Naive thymus-derived CD4-positive, alpha-beta T cell (primary cell): ENCODE measurements at regions of chr15 and their contacts with region 1.

Region 1: DNA sequence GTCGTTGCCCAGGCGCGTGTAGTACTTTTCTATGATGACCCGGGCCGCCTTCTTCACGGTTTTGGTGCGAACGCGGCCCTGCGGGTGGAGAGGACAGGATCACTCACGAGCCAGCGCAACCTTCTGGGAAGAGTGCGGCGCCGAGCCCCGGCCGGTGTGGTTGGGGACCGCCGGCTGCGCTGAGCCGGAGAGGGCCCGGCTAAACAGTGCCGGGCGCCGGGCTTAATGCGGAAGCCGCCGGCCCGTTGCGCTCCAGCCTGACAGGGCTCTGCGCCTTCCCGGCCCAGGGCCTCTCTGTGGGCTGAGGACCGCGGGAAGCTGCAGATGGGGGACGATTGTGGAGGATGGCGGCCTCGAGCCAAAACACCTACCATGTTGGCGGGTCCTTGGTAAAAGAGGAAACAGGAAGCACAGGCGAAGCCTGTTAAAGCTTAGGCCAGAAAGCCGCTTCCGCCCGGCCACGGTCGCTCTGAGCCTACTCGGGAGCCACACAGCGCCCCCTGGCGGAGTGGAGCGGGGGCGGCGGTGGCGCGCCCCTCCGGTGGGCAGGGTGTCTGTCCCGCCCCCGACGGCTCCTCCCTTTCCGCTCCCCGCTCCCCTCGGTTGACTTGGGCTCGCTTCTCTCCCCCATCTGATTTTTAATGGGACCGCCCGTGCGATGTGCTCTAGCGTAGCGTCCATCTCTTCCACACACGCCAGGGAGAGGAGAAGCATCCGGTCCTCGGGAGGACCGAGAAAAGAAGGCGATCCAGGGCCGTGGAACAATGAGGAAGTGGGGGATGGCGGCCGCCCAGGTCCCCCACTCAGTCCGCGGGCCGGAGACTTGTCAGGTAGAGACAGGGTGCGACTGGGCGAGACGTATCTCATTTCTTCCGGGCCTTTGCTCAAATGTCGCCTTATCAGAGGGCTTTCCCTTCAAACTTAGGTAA is at the start of gene RPS17:
- DNase-seq: peak; percentile 96 to 100 (median 99)
- ATAC-seq: peak; percentile 98
- H3K4me3 ChIP-seq: peak within 1 kb of the TSS; percentile 84
- H3K4me3 Mint-ChIP-seq: peak within 1 kb of the TSS; percentile 90 to 98 (median 96)
- H3K27ac ChIP-seq: peak within 1 kb of the TSS; percentile 90
- H3K27ac Mint-ChIP-seq: peak within 1 kb of the TSS; percentile 89 to 97 (median 95)
- H3K4me1 ChIP-seq: peaks cover 10 to 18% of the 10 kb centered on the region in 2 donors
- H3K4me1 Mint-ChIP-seq: peaks cover 13 to 43% (median 28%) of the 10 kb centered on the region in 7 donors
- H3K27me3 ChIP-seq: no peaks in the 10 kb centered on the region
- H3K27me3 Mint-ChIP-seq: peaks cover 0 to 4% (median 0%) of the 10 kb centered on the region in 5 donors
- total RNA-seq, gene RPS17: 1,951 to 3,227 (median 2,164) TPM

Region 2: DNA sequence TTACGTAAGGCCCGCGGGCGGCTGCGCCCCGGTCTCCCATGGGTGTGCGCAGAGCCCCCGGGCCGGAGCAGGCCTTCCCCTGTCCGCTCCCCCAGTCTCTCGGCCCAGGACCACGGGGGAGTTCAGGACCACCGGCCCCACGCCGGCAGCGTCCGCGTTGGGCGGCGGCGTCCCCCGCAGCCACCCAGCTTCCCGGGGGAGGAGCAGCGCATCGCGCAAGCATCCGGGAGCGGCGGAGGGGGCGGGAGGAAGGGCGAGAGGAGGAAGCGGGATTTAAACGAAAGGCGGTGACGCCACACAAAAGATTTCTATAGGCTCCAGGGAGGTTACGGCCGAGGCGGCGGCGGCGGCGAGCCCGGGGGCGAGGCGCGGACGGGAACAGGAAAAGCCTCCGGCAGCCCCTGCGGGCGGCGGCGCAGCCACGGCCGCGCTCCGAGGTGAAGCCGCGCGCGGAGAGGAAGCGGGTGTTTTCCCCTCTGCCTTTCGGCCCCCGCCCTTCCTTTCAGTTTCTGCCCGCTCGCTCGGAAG is 1539.6 kb before region 1 on chr15 and contains the start of gene TLNRD1:
- CTCF ChIA-PET with region 1: interaction called, 3 read pairs
- POLR2A ChIA-PET with region 1: no interaction called
- intact Hi-C with region 1: loop called in 1 of 2 experiments (anchors 10 kb)
- DNase-seq: peak; percentile 63 to 90 (median 79)
- ATAC-seq: peak; percentile 81
- H3K4me3 ChIP-seq: peak within 1 kb of the TSS; percentile 83
- H3K4me3 Mint-ChIP-seq: peak within 1 kb of the TSS; percentile 91 to 99 (median 96)
- H3K27ac ChIP-seq: peak within 1 kb of the TSS; percentile 91
- H3K27ac Mint-ChIP-seq: peak within 1 kb of the TSS; percentile 94 to 98 (median 97)
- H3K4me1 ChIP-seq: peaks cover 24 to 36% of the 10 kb centered on the region in 2 donors
- H3K4me1 Mint-ChIP-seq: peaks cover 24 to 66% (median 56%) of the 10 kb centered on the region in 7 donors
- H3K27me3 ChIP-seq: no peaks in the 10 kb centered on the region
- H3K27me3 Mint-ChIP-seq: no peaks in the 10 kb centered on the region
- total RNA-seq, gene TLNRD1: 11.5 to 33.0 (median 22.5) TPM

Region 3: DNA sequence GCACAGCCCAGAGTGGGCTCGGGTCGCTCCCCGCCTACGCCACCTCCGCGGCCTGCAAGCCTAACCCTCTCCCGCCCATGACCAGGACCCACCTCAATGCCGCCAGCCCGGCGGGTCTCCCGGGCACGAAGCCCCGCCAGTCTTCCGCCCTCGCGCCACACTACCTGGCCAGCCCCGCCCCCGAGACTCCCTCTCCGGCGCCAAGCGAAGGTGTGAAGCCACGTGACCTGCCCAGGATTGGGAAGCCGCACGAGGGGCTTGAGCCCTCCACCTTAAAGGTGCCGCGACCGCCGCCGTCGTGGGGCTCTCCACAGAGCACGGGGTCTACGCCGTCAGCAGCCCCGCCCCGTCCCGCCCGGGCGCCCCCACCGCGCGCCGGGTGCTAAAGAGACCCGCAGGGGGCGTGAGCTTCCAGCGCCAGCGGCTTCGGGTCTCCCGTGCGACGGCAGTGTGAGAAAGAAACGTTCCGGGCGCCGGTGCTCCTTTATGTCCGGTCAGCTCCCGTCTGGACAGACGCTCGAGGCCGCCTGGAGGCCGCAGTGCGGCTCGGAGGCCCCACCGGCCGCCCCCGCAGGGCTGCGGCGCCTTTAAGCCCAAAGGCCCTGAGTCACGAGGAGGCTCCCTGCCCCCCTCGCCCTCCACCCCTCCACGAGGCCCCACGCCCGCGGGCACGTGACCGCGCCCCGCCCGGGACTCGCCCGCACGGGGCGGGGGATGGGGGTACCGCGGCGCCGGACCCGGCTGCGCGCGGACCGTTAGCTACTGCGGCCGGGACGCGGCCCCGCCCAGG is 106.9 kb after region 1 on chr15 and contains the start of gene CPEB1:
- CTCF ChIA-PET with region 1: no interaction called
- POLR2A ChIA-PET with region 1: no interaction called
- intact Hi-C with region 1: loop called in 1 of 2 experiments (anchors 10 kb)
- DNase-seq: peak; percentile 4 to 33 (median 26)
- ATAC-seq: peak; percentile 68
- H3K4me3 ChIP-seq: peak within 1 kb of the TSS; percentile 47
- H3K4me3 Mint-ChIP-seq: peak within 1 kb of the TSS; percentile 62 to 85 (median 71)
- H3K27ac ChIP-seq: no peak within 1 kb of the TSS
- H3K27ac Mint-ChIP-seq: peak within 1 kb of the TSS in 2 of 9 donors; percentile 59 to 62
- H3K4me1 ChIP-seq: peaks cover 0 to 14% of the 10 kb centered on the region in 2 donors
- H3K4me1 Mint-ChIP-seq: peaks cover 0 to 9% (median 4%) of the 10 kb centered on the region in 7 donors
- H3K27me3 ChIP-seq: peaks cover 5 to 15% of the 10 kb centered on the region in 2 donors
- H3K27me3 Mint-ChIP-seq: peaks cover 21 to 69% (median 41%) of the 10 kb centered on the region in 5 donors
- total RNA-seq, gene CPEB1: 0.24 to 1.0 (median 0.51) TPM in 4 of 5 experiments, not detected in the other

Region 4: GRCh38 chr15:82709421-82710207 is 169.3 kb after region 1 on chr15 and contains the start of gene AP3B2:
- CTCF ChIA-PET with region 1: no interaction called
- POLR2A ChIA-PET with region 1: interaction called, 3 read pairs
- intact Hi-C with region 1: loop called in 1 of 2 experiments (anchors 1 kb)
- DNase-seq: peak; percentile 28 to 73 (median 56)
- ATAC-seq: peak; percentile 93
- H3K4me3 ChIP-seq: peak within 1 kb of the TSS; percentile 61
- H3K4me3 Mint-ChIP-seq: peak within 1 kb of the TSS in 9 of 10 donors; percentile 51 to 87 (median 67)
- H3K27ac ChIP-seq: peak within 1 kb of the TSS; percentile 7
- H3K27ac Mint-ChIP-seq: no peak within 1 kb of the TSS
- H3K4me1 ChIP-seq: peaks cover 0 to 4% of the 10 kb centered on the region in 2 donors
- H3K4me1 Mint-ChIP-seq: peaks cover 0 to 8% (median 0%) of the 10 kb centered on the region in 7 donors
- H3K27me3 ChIP-seq: peaks cover 0 to 2% of the 10 kb centered on the region in 2 donors
- H3K27me3 Mint-ChIP-seq: peaks cover 0 to 32% (median 18%) of the 10 kb centered on the region in 5 donors
- total RNA-seq, gene AP3B2: 0.56 to 1.2 (median 0.85) TPM in 4 of 5 experiments, not detected in the other

Region 5: DNA sequence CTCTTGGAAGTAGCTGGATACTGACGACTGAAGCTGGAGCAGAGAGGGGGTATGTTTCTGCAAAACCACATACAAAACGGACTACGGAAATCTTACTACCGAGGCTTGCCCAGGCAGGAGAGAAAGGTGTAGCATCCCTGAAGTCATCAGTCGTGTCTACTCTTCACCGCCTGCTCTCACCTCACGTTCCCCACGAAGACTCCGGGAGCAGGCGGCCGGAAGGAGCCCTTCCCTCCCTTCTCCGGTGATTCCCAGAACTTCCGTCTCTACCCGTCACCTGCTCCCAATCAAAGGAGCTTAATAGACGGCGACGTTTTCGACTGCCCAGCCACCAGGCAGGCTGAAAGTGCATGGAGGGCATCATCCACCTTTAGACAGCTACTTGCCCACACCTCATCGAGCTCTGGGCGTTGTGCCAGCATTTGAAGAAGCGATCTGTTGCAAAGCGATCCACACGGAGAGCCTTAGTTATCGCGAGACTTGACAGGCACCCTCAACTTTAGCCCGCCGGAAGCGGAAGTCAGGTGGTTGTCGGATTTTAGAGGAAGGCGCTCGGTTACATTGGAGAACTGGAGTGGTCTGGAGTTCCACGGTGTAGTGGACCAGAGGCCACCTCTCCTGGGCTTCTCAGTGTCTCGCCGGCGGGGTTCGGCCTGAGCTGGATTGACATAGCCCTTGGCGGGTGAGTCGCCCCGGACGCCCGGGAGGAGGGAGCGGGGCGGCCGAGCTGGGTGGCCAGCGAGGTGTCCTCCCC is 445.5 kb after region 1 on chr15 and contains the start of gene RAMAC:
- CTCF ChIA-PET with region 1: interaction called, 5 read pairs
- POLR2A ChIA-PET with region 1: interaction called, 30 read pairs
- intact Hi-C with region 1: loop called (anchors 1 kb)
- DNase-seq: peak; percentile 70 to 97 (median 91)
- ATAC-seq: peak; percentile 93
- H3K4me3 ChIP-seq: peak within 1 kb of the TSS; percentile 90
- H3K4me3 Mint-ChIP-seq: peak within 1 kb of the TSS; percentile 84 to 100 (median 99)
- H3K27ac ChIP-seq: peak within 1 kb of the TSS; percentile 82
- H3K27ac Mint-ChIP-seq: peak within 1 kb of the TSS; percentile 73 to 99 (median 95)
- H3K4me1 ChIP-seq: peaks cover 14 to 18% of the 10 kb centered on the region in 2 donors
- H3K4me1 Mint-ChIP-seq: peaks cover 21 to 43% (median 35%) of the 10 kb centered on the region in 7 donors
- H3K27me3 ChIP-seq: no peaks in the 10 kb centered on the region
- H3K27me3 Mint-ChIP-seq: no peaks in the 10 kb centered on the region
- total RNA-seq, gene RAMAC: 14.2 to 27.7 (median 18.7) TPM

Region 6: GRCh38 chr15:83011271-83012075 is 471.2 kb after region 1 on chr15 and contains the start of gene C15orf40:
- CTCF ChIA-PET with region 1: interaction called, 4 read pairs
- POLR2A ChIA-PET with region 1: interaction called, 18 read pairs
- intact Hi-C with region 1: loop called (anchors 1 kb)
- DNase-seq: peak; percentile 71 to 90 (median 80)
- ATAC-seq: peak; percentile 92
- H3K4me3 ChIP-seq: peak within 1 kb of the TSS; percentile 91
- H3K4me3 Mint-ChIP-seq: peak within 1 kb of the TSS; percentile 91 to 100 (median 96)
- H3K27ac ChIP-seq: peak within 1 kb of the TSS; percentile 77
- H3K27ac Mint-ChIP-seq: peak within 1 kb of the TSS; percentile 88 to 98 (median 92)
- H3K4me1 ChIP-seq: peaks cover 14 to 24% of the 10 kb centered on the region in 2 donors
- H3K4me1 Mint-ChIP-seq: peaks cover 43 to 70% (median 55%) of the 10 kb centered on the region in 7 donors
- H3K27me3 ChIP-seq: no peaks in the 10 kb centered on the region
- H3K27me3 Mint-ChIP-seq: no peaks in the 10 kb centered on the region
- total RNA-seq, gene C15orf40: 12.1 to 47.2 (median 28.9) TPM

Region 7: DNA sequence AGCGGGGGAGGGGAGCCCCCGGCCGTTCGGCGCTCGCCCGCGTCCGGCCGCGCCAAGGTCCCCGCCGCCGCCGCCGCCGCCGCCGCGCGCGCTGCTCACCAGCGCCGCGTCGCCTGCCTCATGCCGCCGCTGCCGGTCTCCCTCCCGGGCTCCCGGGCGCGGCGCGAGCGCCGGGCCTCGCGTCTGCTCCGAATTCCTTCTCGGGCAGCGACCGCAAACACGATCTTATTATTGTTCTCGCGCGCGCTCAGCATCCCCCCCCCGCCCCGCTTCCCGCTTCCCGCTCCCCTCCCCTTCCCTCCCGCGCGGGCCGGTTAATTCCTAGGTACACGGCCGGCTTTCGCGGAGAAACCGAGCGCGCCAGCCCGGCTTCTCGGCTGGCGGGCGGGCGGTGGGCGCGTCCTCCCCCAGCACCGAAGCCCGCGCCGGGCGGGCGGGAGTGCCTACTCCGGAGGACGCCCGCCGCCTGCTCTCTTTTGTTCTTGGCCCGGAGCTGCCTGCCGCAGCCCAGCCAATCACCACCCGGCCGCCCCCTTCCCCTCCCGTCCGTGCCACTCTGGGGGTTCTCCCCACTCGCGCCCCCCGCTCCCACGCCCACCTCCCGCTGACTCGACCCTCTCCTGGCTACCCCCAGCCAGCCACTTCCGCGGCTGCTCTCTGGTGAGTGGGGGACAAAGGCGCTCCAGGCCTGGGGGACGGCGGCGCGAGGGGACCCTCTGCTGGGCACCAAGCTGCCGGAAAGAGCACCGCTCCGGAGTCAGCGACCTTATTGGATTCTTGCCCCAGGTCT is 667.5 kb after region 1 on chr15 and contains the start of gene HDGFL3:
- CTCF ChIA-PET with region 1: no interaction called
- POLR2A ChIA-PET with region 1: no interaction called
- intact Hi-C with region 1: loop called in 1 of 2 experiments (anchors 10 kb)
- DNase-seq: peak in 6 of 9 donors; percentile 5 to 53 (median 24)
- ATAC-seq: peak; percentile 55
- H3K4me3 ChIP-seq: no peak within 1 kb of the TSS
- H3K4me3 Mint-ChIP-seq: peak within 1 kb of the TSS; percentile 85 to 97 (median 93)
- H3K27ac ChIP-seq: peak within 1 kb of the TSS; percentile 51
- H3K27ac Mint-ChIP-seq: peak within 1 kb of the TSS in 5 of 9 donors; percentile 78 to 86 (median 85)
- H3K4me1 ChIP-seq: peaks cover 0 to 3% of the 10 kb centered on the region in 2 donors
- H3K4me1 Mint-ChIP-seq: peaks cover 0 to 18% (median 7%) of the 10 kb centered on the region in 7 donors
- H3K27me3 ChIP-seq: peaks cover 3% of the 10 kb centered on the region in 2 donors
- H3K27me3 Mint-ChIP-seq: peaks cover 14 to 37% (median 19%) of the 10 kb centered on the region in 5 donors
- total RNA-seq, gene HDGFL3: 2.1 to 50.1 (median 3.6) TPM